ENCODE measurements at regions of chr13 and their contacts with region 1.

Region 1: GRCh38 chr13:92640936-92641335 is 585.7 kb upstream of the GPC6 start:
- DNase-seq: no peak

Region 2: DNA sequence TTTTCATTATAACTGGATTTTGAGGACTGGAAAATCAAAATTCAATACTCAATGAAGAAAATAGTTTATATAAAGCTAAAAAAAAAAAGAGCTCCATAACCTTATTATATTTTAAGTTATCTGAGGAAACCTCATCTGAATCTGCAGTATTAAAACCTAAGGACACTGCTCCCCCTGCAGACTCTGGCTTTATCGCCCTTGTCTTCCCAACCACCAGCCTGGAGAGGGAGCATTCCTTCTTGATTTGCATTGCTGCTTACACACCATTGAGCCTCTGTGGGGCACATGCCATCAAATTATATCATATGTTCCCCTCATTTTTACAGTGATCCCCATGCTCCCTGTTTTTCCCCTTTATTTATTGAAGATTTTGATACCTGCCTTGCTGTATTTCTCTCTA is 285.7 kb before region 1 on chr13:
- intact Hi-C with region 1: no loop called
- DNase-seq: no peak

Region 3: DNA sequence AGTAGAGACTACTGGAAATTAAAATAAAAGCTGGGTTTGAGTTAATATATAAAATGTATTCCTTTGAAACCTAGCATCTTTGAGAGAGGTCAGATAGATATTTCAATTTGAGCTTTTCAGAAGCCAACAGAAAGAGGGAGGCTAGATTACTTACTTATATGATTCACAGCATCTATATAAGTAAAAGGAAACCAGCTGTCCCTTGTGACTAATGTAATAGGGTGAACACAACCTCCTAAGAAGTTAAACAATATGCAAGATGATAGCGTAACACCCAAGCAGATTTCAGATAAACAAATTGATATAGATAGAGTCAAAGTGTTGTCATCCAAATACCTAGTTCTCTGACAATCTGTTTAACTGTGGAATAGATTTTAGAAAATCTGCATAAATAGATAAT is 192.1 kb after region 1 on chr13:
- intact Hi-C with region 1: no loop called
- DNase-seq: no peak

Region 4: GRCh38 chr13:93039131-93039530 is 398.2 kb after region 1 on chr13:
- intact Hi-C with region 1: loop called in 1 of 2 experiments (anchors 10 kb)
- DNase-seq: no peak